HEK293 (cell line): ENCODE measurements at regions of chr2 and their contacts with region 1.

Region 1: DNA sequence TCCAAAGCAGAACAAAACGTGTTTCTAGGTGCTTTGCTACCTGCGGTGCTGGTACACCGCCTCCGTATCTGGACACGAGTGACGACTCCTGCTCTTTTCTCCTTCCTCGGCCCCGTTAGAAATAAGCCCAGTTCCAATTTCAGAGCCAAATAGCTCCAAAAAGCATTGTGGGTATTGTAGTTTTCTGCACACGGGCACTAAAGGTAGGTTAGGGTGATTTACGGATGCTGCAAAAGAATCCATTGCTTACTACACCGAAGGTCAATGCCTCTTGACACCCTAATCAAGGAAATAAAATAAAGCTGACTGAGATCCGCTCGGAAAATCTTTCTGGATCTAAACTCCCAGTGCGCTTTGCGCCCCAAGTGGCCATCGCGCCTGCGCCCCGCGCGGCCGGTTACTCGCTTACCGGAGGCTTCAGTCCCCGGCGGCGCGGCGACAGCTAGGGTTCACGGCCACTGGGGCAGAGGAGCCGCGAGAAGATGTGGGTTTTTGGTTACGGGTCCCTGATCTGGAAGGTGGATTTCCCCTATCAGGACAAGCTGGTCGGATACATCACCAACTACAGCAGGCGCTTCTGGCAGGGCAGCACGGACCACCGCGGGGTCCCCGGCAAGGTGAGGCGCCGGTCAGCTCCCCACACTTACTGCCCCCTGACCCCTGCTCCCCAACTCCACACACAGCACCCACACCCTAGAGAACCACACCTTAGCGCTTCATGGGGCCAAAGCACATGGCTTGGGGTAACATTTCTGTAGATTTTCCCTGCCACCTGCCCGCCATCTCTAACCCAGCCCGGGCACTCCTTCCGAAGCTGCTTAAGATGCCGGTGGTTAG is at the start of gene CHAC2:
- H3K4me3 ChIP-seq: peak within 1 kb of the TSS; percentile 71
- H3K27ac ChIP-seq: peak within 1 kb of the TSS; percentile 72
- H3K4me1 ChIP-seq: 0 out of 2 replicates have a peak, but pooled peaks cover 6% of the 10 kb centered on the region
- CTCF ChIP-seq: peak; percentile 85

Region 2: DNA sequence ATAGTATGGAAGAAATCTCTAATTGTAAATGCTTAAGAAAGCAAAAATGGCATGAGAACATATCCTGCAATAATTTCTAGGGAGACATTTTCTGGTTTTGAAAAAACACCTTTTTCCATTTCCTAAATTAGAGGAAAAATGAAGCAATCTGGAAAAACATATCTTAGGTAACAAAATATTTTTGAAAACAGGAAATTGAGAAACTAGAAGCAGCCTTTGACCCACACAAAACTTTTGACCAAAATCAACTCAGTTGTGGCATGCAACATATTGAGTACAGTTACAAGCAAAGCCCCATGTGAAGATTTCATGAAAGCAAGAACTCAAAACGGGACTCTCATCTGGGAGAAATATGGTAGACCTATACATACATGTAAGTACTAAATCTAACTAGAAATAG is 28.6 kb before region 1 on chr2:
- CTCF ChIA-PET with region 1: no interaction called
- POLR2A ChIA-PET with region 1: no interaction called
- H3K4me3 ChIP-seq: no peak overlapping the region
- H3K27ac ChIP-seq: no peak overlapping the region
- H3K4me1 ChIP-seq: no peaks in the 10 kb centered on the region
- CTCF ChIP-seq: no peak

Region 3: GRCh38 chr2:53786705-53787612 is 19.3 kb after region 1 on chr2 and contains the starts of genes ASB3 and ERLEC1:
- CTCF ChIA-PET with region 1: interaction called, 6 read pairs
- POLR2A ChIA-PET with region 1: interaction called, 38 read pairs
- H3K4me3 ChIP-seq: peak within 1 kb of the TSS; percentile 87
- H3K27ac ChIP-seq: peak within 1 kb of the TSS; percentile 90
- H3K4me1 ChIP-seq: peaks cover 8% of the 10 kb centered on the region; the same call in 1 of the 2 replicates
- CTCF ChIP-seq: peak; percentile 21; the same call in 1 of the 2 replicates

Region 4: GRCh38 chr2:53842891-53843290 is 75.3 kb after region 1 on chr2:
- CTCF ChIA-PET with region 1: no interaction called
- POLR2A ChIA-PET with region 1: no interaction called
- H3K4me3 ChIP-seq: no peak overlapping the region
- H3K27ac ChIP-seq: no peak overlapping the region
- H3K4me1 ChIP-seq: no peaks in the 10 kb centered on the region
- CTCF ChIP-seq: no peak